GM12878 (cell line): ENCODE measurements at regions of chr1 and their contacts with region 1.

Region 1: GRCh38 chr1:113859478-113860175 is 11.9 kb downstream of the PTPN22 start:
- DNase-seq: peak; percentile 87
- ATAC-seq: peak; percentile 91
- H3K4me3 ChIP-seq: peak overlapping the region; percentile 51
- H3K27ac ChIP-seq: peak overlapping the region; percentile 84
- H3K4me1 ChIP-seq: peaks cover 50% of the 10 kb centered on the region
- H3K27me3 ChIP-seq: no peaks in the 10 kb centered on the region
- CTCF ChIP-seq: no peak; a peak in 1 of 6 replicates
- EP300 ChIP-seq: peak; percentile 30 to 91; a peak in 3 of 4 replicates
- POLR2A ChIP-seq: no peak
- RAD21 ChIP-seq: no peak

Region 2: GRCh38 chr1:113871597-113872113 is 12.0 kb after region 1 on chr1 and contains the start of gene PTPN22:
- CTCF ChIA-PET with region 1: interaction called, 66 read pairs
- POLR2A ChIA-PET with region 1: interaction called, 111 read pairs
- RAD21 ChIA-PET with region 1: interaction called, 189 read pairs
- SMC1A ChIA-PET with region 1: interaction called, 396 read pairs
- in situ Hi-C with region 1: no loop called
- intact Hi-C with region 1: loop called (anchors 1 kb)
- DNase-seq: peak; percentile 90
- ATAC-seq: peak; percentile 87
- H3K4me3 ChIP-seq: peak within 1 kb of the TSS; percentile 89
- H3K27ac ChIP-seq: peak within 1 kb of the TSS; percentile 79
- H3K4me1 ChIP-seq: peaks cover 47% of the 10 kb centered on the region
- H3K27me3 ChIP-seq: no peaks in the 10 kb centered on the region
- CTCF ChIP-seq: no peak
- EP300 ChIP-seq: peak in 1 of 2 experiments; percentile 86; a peak in 3 of 4 replicates
- POLR2A ChIP-seq: peak; percentile 90
- RAD21 ChIP-seq: no peak
- polyA plus RNA-seq, gene PTPN22: 30.3 to 32.3 TPM

Region 3: GRCh38 chr1:113887402-113888175 is 28.0 kb after region 1 on chr1 and contains the start of gene BCL2L15:
- CTCF ChIA-PET with region 1: interaction called, 56 read pairs
- POLR2A ChIA-PET with region 1: interaction called, 111 read pairs
- RAD21 ChIA-PET with region 1: interaction called, 189 read pairs
- SMC1A ChIA-PET with region 1: interaction called, 396 read pairs
- in situ Hi-C with region 1: no loop called
- intact Hi-C with region 1: no loop called
- DNase-seq: no peak
- ATAC-seq: no peak
- H3K4me3 ChIP-seq: no peak within 1 kb of the TSS
- H3K27ac ChIP-seq: no peak within 1 kb of the TSS
- H3K4me1 ChIP-seq: no peaks in the 10 kb centered on the region
- H3K27me3 ChIP-seq: no peaks in the 10 kb centered on the region
- CTCF ChIP-seq: no peak
- EP300 ChIP-seq: no peak
- POLR2A ChIP-seq: no peak
- RAD21 ChIP-seq: no peak
- polyA plus RNA-seq, gene BCL2L15: 0.42 to 0.56 TPM

Region 4: DNA sequence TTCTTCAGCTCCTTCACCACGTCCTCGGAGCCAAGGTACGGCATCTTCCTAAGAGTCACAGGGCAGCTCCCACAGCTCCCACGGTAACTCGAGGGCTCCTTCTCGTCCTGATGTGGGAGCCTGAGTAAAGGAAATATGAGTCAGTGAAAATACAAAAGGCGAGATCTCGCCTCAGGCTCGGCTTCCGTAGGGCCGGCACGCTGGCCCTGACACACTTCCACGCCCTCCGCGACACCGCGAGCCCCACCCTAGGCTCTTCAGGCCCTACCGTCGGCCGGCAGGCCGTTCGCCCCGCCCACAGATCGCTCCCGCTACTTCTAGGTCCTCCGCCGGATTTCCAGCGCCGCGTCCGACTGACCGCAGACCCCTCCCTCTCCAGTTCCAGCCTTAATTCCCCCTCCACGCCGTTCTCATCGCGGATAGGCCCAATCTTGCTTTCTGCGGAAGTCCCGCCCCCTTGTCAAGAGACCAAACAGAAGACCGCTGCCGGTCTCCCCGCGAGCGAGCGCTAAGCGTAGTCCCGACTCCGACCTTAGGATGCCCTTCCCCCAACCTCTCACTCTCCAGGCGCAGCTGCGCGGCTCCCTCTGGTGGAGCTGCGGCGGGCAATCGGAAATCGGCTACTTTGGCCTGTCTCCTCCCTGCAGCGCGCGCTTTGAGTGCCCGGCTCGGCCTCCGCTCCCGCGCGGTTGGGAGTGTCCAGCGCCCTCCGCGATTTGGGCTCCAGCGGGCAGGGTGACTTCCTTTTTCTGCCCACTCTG is 45.2 kb after region 1 on chr1 and contains the starts of genes AP4B1 and DCLRE1B:
- CTCF ChIA-PET with region 1: interaction called, 50 read pairs
- POLR2A ChIA-PET with region 1: interaction called, 68 read pairs
- RAD21 ChIA-PET with region 1: interaction called, 110 read pairs
- SMC1A ChIA-PET with region 1: interaction called, 101 read pairs
- in situ Hi-C with region 1: no loop called
- intact Hi-C with region 1: loop called (anchors 2 kb)
- DNase-seq: peak; percentile 99
- ATAC-seq: peak; percentile 94
- H3K4me3 ChIP-seq: peak within 1 kb of the TSS; percentile 91
- H3K27ac ChIP-seq: peak within 1 kb of the TSS; percentile 88
- H3K4me1 ChIP-seq: peaks cover 3% of the 10 kb centered on the region
- H3K27me3 ChIP-seq: no peaks in the 10 kb centered on the region
- CTCF ChIP-seq: peak; percentile 63 to 98 (median 67)
- EP300 ChIP-seq: peak in 1 of 2 experiments; percentile 69; a peak in 1 of 4 replicates
- POLR2A ChIP-seq: peak; percentile 77
- RAD21 ChIP-seq: peak; percentile 93
- polyA plus RNA-seq, gene AP4B1: 27.2 to 29.0 TPM
- polyA plus RNA-seq, gene DCLRE1B: 5.4 to 7.4 TPM